Dorsolateral prefrontal cortex (tissue), 120 donors: ENCODE measurements at regions of chr2 and their contacts with region 1.

Region 1: DNA sequence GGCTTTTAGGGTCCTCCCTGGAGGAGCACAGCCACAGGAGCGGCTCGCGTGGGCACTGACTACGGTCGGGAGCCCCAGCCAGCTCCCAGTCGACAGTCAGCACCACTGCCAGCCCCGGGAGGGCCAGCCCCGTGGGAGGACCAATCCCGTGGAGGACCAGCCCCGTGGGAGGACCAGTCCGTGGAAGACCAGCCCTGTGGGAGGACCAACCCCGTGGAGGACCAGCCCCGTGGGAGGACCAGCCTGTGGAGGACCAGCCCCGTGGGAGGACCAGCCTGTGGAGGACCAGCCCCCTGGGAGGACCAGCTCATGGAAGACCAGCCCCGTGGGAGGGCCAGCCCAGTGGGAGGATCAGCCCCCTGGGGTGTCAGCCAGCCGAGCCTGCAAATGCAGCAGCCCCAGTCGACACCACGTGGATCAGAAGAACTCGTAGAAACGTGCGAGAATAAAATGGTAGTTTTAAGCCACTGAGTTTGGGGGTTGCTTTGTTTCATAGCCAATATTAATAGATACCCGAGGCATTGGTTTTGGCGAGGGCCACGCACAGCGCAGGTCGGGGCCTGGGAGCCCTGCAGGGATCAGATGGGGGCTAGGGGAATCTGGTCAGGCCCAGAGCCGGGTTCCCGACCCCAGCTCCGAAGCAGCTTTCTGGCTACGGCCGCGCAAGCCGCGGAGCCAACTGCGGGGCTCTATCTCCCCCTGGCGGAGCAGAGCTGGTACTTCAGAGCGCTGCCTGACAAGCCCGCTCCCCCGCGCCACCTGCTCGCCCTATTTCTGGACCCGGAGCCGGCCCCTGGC is 73.0 kb downstream of the TEX51 start:
- DNase-seq: peak; percentile 67 to 86 (median 78)
- H3K4me3 ChIP-seq: peak overlapping the region; percentile 32 to 72 (median 59)
- H3K27ac ChIP-seq: peak overlapping the region in 46 of 59 donors; percentile 5 to 85 (median 64)
- H3K27me3 ChIP-seq: no peaks in the 10 kb centered on the region
- CTCF ChIP-seq: peak; percentile 81 to 99 (median 96)

Region 2: GRCh38 chr2:125745514-125745913 is 1226.2 kb before region 1 on chr2:
- intact Hi-C with region 1: loop called in 1 of 2 experiments (anchors 5 kb)
- DNase-seq: peak in 7 of 10 donors; percentile 6 to 66 (median 45)
- H3K4me3 ChIP-seq: no peak overlapping the region
- H3K27ac ChIP-seq: no peak overlapping the region
- H3K27me3 ChIP-seq: no peaks in the 10 kb centered on the region
- CTCF ChIP-seq: peak in 55 of 56 donors; percentile 27 to 85 (median 64)

Region 3: DNA sequence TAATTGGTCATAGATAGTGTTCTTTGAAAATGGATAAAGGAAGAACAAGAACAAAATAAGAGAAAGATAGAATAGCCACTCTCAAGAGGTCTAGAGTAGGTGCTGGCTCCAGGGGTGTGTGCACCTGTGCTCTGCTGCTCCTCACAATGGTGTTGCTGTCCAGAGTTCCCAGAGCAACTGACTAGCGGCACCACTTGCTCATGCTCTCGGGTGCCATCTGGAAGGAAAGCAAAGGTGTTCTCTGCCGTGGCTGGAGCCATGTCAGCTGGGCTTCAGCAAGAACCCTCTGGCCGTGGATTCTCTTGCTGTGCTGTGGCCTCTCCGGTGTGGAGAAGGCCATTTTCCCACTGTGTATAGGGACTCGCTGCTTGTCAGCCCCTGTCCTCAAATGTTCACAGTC is 187.7 kb before region 1 on chr2:
- intact Hi-C with region 1: loop called (anchors 5 to 10 kb)
- DNase-seq: peak in 4 of 10 donors; percentile 31 to 43 (median 36)
- H3K4me3 ChIP-seq: no peak overlapping the region
- H3K27ac ChIP-seq: peak overlapping the region in 9 of 59 donors; percentile 6 to 64 (median 36)
- H3K27me3 ChIP-seq: peaks cover 0 to 4% (median 0%) of the 10 kb centered on the region in 45 donors
- CTCF ChIP-seq: no peak

Region 4: DNA sequence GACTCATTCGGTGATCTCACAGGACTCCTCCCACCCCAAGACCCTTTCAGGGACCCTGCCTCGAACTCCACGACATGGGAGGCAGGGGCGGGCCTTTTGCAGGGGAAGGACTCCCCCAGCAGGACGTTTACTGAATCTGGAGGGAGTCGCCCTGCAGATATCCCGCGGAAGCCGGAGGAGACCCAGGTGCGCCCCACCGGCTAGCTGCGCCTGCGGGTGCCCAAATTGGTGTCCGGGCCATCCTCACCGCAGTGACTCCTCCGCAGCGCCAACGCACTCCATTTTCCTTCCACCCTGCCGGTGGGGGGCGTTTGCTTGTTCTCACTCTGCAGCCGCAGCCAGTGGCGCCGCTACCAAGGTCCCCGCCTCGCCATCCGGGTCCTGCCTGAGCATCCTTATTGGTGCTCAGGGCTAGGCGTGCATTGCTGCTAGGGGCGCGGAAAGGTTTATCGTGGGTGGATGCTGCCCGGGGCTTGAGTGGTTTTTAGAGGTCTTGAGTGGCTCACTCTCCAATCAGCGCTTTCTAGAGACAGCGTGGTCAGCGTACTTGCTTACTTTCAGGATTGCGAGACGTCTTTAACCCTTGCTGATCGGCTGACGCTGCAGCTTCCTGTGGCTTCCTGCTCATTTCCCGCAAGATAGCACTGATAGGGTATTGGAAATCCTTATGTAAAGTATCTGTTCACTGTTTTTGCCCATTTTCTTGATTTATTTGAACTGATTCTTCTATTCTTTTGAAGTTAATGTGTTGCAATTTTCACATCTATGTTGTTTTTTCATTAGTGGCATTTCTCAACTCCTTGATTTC is 53.9 kb after region 1 on chr2:
- intact Hi-C with region 1: loop called (anchors 10 kb)
- DNase-seq: peak; percentile 87 to 95 (median 92)
- H3K4me3 ChIP-seq: peak overlapping the region; percentile 52 to 86 (median 70)
- H3K27ac ChIP-seq: peak overlapping the region; percentile 17 to 92 (median 85)
- H3K27me3 ChIP-seq: no peaks in the 10 kb centered on the region
- CTCF ChIP-seq: peak in 55 of 56 donors; percentile 30 to 84 (median 63)

Region 5: DNA sequence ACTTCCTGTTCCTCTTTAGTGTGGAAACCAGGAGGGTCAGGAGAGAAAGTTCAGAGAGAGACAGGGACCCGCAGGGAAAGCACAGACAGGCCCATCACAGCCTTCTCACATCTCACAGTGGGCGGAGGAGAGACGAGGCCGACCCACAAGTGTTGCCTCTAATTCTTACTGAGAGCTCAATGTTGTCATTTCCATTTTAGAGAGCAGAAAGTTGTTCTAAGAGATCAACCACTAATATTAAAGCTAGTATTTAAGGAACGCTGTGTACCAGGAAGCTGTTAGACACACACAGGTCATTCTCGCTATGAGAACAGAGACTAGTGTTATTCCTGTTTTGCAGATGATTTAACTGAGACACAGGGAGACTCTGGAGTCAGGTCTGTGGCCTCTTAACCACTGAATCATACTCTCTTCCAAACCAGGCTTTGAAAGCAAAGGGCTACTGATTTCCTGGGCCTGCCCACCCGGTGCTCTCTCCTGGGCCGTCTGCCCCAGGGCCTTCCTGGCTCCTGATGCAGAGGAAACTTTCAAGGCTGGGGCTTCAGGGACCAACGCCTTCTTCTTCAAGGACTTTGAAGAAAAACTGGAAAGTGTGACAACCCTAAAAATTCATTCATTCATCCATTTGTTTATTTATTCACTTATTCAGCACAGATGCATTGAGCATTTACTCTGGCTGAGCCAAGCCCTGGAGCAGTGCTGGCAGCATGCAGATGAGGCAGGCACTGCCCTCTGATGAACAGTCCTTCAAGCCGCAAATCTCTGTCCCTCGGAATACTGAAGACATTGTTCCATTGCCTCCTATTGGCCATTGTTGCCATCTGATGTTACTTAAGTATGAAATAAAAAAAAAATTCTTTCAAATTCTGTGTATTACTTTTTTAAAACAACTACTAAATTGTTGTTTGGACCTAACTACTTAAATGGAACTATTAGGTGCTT is 172.4 kb after region 1 on chr2:
- intact Hi-C with region 1: loop called in 1 of 2 experiments (anchors 10 kb)
- DNase-seq: peak in 7 of 10 donors; percentile 72 to 87 (median 79)
- H3K4me3 ChIP-seq: peak overlapping the region in 1 of 59 donors; percentile 10
- H3K27ac ChIP-seq: peak overlapping the region; percentile 2 to 98 (median 92)
- H3K27me3 ChIP-seq: no peaks in the 10 kb centered on the region
- CTCF ChIP-seq: peak in 54 of 56 donors; percentile 21 to 75 (median 52)